Lower lobe of right lung (tissue), 2 donors: ENCODE measurements at regions of chr9 and their contacts with region 1.

Region 1: GRCh38 chr9:127943731-127944144 is 6.1 kb upstream of the DPM2 start:
- DNase-seq: peak; percentile 93
- ATAC-seq: peak; percentile 90 to 91
- H3K4me3 ChIP-seq: no peak overlapping the region
- H3K27ac ChIP-seq: no peak overlapping the region
- H3K4me1 ChIP-seq: peaks cover 27% of the 10 kb centered on the region
- H3K27me3 ChIP-seq: no peaks in the 10 kb centered on the region
- CTCF ChIP-seq: peak; percentile 94

Region 2: DNA sequence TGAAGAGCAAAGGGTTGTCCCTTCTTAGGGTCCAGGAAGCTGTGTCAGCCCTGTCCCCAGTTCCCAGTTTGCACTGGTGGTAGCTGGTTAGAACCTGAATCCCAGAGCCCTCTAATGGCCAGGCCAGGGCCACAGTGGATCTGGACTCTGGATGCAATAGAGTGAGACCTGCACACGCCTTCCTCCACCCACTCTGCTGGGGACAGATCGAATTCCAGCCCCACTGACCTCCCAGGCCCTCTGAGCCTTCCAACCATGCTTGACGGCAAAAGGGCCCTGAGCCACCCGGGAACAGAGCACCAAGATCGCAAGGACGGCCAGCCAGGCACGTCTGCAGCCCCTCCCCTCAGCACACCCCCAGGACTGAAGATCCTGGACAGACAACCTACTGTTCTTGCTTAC is 99.7 kb after region 1 on chr9:
- intact Hi-C with region 1: loop called (anchors 10 kb)
- DNase-seq: no peak
- ATAC-seq: peak in 1 of 2 donors; percentile 25
- H3K4me3 ChIP-seq: no peak overlapping the region
- H3K27ac ChIP-seq: no peak overlapping the region
- H3K4me1 ChIP-seq: no peaks in the 10 kb centered on the region
- H3K27me3 ChIP-seq: no peaks in the 10 kb centered on the region
- CTCF ChIP-seq: no peak